ENCODE measurements at regions of chr11 and their contacts with region 1.

Region 1: GRCh38 chr11:42812361-42812760 is 499.4 kb upstream of the API5 start:
- DNase-seq: no peak
- H3K4me3 ChIP-seq: no peak overlapping the region
- H3K27ac ChIP-seq: no peak overlapping the region
- H3K4me1 ChIP-seq: no peaks in the 10 kb centered on the region
- H3K27me3 ChIP-seq: no peaks in the 10 kb centered on the region
- CTCF ChIP-seq: no peak
- POLR2A ChIP-seq: no peak

Region 2: DNA sequence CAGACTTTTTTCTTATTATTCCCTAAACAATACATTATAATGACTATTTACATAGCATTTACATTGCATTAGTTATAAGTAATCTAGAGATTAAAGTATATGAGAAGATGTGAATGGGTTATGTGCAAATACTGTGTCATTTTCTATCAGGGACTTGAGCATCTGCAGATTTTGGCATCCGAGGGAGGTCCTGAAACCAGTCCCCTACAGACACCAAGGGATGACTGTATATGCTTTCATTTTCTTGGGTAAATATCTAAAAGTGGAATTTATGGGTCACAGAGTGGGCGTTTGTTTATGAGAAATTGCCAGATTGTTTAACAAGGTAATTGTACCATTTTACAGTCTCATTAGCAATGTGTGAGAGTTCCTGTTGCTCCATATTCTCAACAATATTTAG is 45.0 kb after region 1 on chr11:
- intact Hi-C with region 1: loop called (anchors 5 kb)
- DNase-seq: no peak
- H3K4me3 ChIP-seq: no peak overlapping the region
- H3K27ac ChIP-seq: no peak overlapping the region
- H3K4me1 ChIP-seq: no peaks in the 10 kb centered on the region
- H3K27me3 ChIP-seq: no peaks in the 10 kb centered on the region
- CTCF ChIP-seq: no peak
- POLR2A ChIP-seq: no peak

Region 3: GRCh38 chr11:42870480-42870879 is 58.1 kb after region 1 on chr11:
- intact Hi-C with region 1: no loop called
- DNase-seq: no peak
- H3K4me3 ChIP-seq: no peak overlapping the region
- H3K27ac ChIP-seq: no peak overlapping the region
- H3K4me1 ChIP-seq: no peaks in the 10 kb centered on the region
- H3K27me3 ChIP-seq: no peaks in the 10 kb centered on the region
- CTCF ChIP-seq: no peak
- POLR2A ChIP-seq: no peak

Measured in breast epithelium (tissue), 4 donors.